ENCODE measurements at regions of chr5 and their contacts with region 1.

Region 1: GRCh38 chr5:128074947-128075346 is 8.6 kb upstream of the SLC12A2 start:
- DNase-seq: no peak
- H3K4me3 ChIP-seq: no peak overlapping the region
- H3K27ac ChIP-seq: no peak overlapping the region
- H3K4me1 ChIP-seq: no peaks in the 10 kb centered on the region
- H3K27me3 ChIP-seq: no peaks in the 10 kb centered on the region
- CTCF ChIP-seq: no peak

Region 2: GRCh38 chr5:128038643-128039042 is 36.3 kb before region 1 on chr5:
- CTCF ChIA-PET with region 1: no interaction called
- dilution Hi-C with region 1: no loop called
- in situ Hi-C with region 1: no loop called
- intact Hi-C with region 1: loop called (anchors 1 kb)
- DNase-seq: peak; percentile 51
- H3K4me3 ChIP-seq: no peak overlapping the region
- H3K27ac ChIP-seq: peak overlapping the region; percentile 63
- H3K4me1 ChIP-seq: peaks cover 16% of the 10 kb centered on the region
- H3K27me3 ChIP-seq: no peaks in the 10 kb centered on the region
- CTCF ChIP-seq: no peak